ENCODE measurements at regions of chr7 and their contacts with region 1.

Region 1: DNA sequence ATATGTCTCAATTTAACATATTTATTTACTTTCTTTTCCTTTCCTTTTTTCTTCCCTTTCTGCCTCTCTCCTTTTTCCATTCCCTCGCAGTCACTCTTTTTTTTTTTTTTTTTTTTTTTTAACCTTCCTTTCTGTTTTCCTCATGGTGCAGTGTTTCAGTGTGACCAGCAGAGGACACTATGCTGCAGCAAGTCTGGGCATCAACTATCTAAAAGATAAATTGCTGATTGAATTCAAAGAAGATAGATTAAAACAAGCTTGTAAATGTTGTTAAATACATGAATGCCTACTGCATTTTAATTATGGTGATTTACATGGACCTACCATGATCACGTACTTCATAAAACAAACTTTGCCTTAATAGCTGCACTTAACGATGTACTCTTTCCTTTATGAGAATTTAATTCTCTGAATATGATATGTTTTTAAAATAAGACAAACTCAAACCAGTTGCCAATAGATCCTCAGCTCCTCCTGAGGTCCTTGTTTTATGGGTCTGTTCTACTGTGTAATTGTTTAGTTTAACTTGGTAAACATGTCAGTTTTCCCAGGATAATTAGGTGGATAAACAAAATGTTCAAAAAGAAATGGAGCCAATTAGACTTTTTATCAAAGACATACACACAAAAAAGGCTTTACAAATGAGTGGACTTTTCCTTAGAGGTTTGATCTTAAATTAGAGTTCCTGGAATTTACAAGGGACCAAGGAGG is 101.0 kb upstream of the AGR3 start:
- DNase-seq: peak; percentile 52
- H3K4me3 Mint-ChIP-seq: peak overlapping the region; percentile 15
- H3K27ac Mint-ChIP-seq: peak overlapping the region; percentile 13
- H3K4me1 Mint-ChIP-seq: peaks cover 75% of the 10 kb centered on the region
- H3K27me3 Mint-ChIP-seq: no peaks in the 10 kb centered on the region
- CTCF ChIP-seq: peak; percentile 88

Region 2: GRCh38 chr7:16634271-16634738 is 348.5 kb before region 1 on chr7:
- CTCF ChIA-PET with region 1: no interaction called
- intact Hi-C with region 1: no loop called
- DNase-seq: no peak
- H3K4me3 Mint-ChIP-seq: no peak overlapping the region
- H3K27ac Mint-ChIP-seq: no peak overlapping the region
- H3K4me1 Mint-ChIP-seq: peaks cover 35% of the 10 kb centered on the region
- H3K27me3 Mint-ChIP-seq: no peaks in the 10 kb centered on the region
- CTCF ChIP-seq: no peak

Region 3: GRCh38 chr7:16657656-16658279 is 325.0 kb before region 1 on chr7:
- CTCF ChIA-PET with region 1: no interaction called
- intact Hi-C with region 1: no loop called
- DNase-seq: peak; percentile 60
- H3K4me3 Mint-ChIP-seq: no peak overlapping the region
- H3K27ac Mint-ChIP-seq: peak overlapping the region; percentile 34
- H3K4me1 Mint-ChIP-seq: peaks cover 69% of the 10 kb centered on the region
- H3K27me3 Mint-ChIP-seq: no peaks in the 10 kb centered on the region
- CTCF ChIP-seq: no peak

Region 4: DNA sequence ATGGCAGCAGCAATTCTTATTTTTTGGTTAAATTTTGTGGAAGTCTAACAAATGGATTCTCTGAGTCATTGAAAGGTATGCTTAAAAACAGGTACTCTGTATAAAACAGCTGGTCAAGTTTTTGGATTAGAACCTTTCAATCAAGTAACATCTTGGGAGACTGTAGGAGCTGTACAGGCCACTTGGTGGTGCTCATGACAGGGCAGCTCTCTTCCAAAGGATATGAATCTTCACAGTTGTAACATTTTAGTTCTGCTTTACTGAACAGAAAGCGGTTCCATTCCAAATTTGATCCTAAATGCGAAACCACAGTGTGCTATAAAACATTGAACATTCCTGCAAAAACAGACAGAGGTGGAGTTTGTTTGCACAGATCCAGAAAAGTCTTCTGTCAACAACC is 56.5 kb before region 1 on chr7:
- CTCF ChIA-PET with region 1: interaction called, 15 read pairs
- intact Hi-C with region 1: loop called (anchors 2 kb)
- DNase-seq: peak; percentile 57
- H3K4me3 Mint-ChIP-seq: no peak overlapping the region
- H3K27ac Mint-ChIP-seq: peak overlapping the region; percentile 48
- H3K4me1 Mint-ChIP-seq: peaks cover 78% of the 10 kb centered on the region
- H3K27me3 Mint-ChIP-seq: no peaks in the 10 kb centered on the region
- CTCF ChIP-seq: peak; percentile 72

Region 5: GRCh38 chr7:17063045-17063383 is 80.2 kb after region 1 on chr7:
- CTCF ChIA-PET with region 1: interaction called, 10 read pairs
- intact Hi-C with region 1: no loop called
- DNase-seq: no peak
- H3K4me3 Mint-ChIP-seq: no peak overlapping the region
- H3K27ac Mint-ChIP-seq: no peak overlapping the region
- H3K4me1 Mint-ChIP-seq: peaks cover 34% of the 10 kb centered on the region
- H3K27me3 Mint-ChIP-seq: no peaks in the 10 kb centered on the region
- CTCF ChIP-seq: peak; percentile 40

Region 6: DNA sequence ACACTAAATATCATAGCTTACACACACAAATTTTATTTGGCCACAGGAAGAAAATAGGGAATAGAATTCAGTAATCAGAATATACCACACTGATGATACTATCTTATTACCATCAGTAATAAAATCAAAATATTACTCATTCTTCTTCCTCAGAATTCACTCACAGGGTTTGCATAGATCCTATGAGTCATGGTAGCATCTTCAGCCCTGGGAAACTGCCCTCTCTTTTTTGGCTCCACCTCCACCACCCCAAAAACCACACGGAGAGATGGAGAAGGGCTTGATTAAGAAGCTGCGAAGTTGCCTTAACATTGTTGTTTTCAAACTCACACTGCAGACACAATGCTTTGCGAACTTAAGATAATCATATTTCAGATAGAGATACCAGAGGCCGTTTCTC is 161.5 kb after region 1 on chr7:
- CTCF ChIA-PET with region 1: interaction called, 13 read pairs
- intact Hi-C with region 1: no loop called
- DNase-seq: no peak
- H3K4me3 Mint-ChIP-seq: peak overlapping the region; percentile 36
- H3K27ac Mint-ChIP-seq: peak overlapping the region; percentile 100
- H3K4me1 Mint-ChIP-seq: peaks cover 66% of the 10 kb centered on the region
- H3K27me3 Mint-ChIP-seq: no peaks in the 10 kb centered on the region
- CTCF ChIP-seq: no peak

Region 7: GRCh38 chr7:17275749-17276671 is 293.2 kb after region 1 on chr7:
- CTCF ChIA-PET with region 1: interaction called, 14 read pairs
- intact Hi-C with region 1: no loop called
- DNase-seq: no peak
- H3K4me3 Mint-ChIP-seq: peak overlapping the region; percentile 55
- H3K27ac Mint-ChIP-seq: peak overlapping the region; percentile 89
- H3K4me1 Mint-ChIP-seq: peaks cover 56% of the 10 kb centered on the region
- H3K27me3 Mint-ChIP-seq: no peaks in the 10 kb centered on the region
- CTCF ChIP-seq: no peak

Region 8: GRCh38 chr7:17530741-17531417 is 548.1 kb after region 1 on chr7:
- CTCF ChIA-PET with region 1: interaction called, 3 read pairs
- intact Hi-C with region 1: loop called (anchors 2 kb)
- DNase-seq: no peak
- H3K4me3 Mint-ChIP-seq: no peak overlapping the region
- H3K27ac Mint-ChIP-seq: peak overlapping the region; percentile 86
- H3K4me1 Mint-ChIP-seq: peaks cover 66% of the 10 kb centered on the region
- H3K27me3 Mint-ChIP-seq: no peaks in the 10 kb centered on the region
- CTCF ChIP-seq: peak; percentile 41

Measured in Calu3 (cell line).